ENCODE measurements at regions of chr2 and their contacts with region 1.

Region 1: DNA sequence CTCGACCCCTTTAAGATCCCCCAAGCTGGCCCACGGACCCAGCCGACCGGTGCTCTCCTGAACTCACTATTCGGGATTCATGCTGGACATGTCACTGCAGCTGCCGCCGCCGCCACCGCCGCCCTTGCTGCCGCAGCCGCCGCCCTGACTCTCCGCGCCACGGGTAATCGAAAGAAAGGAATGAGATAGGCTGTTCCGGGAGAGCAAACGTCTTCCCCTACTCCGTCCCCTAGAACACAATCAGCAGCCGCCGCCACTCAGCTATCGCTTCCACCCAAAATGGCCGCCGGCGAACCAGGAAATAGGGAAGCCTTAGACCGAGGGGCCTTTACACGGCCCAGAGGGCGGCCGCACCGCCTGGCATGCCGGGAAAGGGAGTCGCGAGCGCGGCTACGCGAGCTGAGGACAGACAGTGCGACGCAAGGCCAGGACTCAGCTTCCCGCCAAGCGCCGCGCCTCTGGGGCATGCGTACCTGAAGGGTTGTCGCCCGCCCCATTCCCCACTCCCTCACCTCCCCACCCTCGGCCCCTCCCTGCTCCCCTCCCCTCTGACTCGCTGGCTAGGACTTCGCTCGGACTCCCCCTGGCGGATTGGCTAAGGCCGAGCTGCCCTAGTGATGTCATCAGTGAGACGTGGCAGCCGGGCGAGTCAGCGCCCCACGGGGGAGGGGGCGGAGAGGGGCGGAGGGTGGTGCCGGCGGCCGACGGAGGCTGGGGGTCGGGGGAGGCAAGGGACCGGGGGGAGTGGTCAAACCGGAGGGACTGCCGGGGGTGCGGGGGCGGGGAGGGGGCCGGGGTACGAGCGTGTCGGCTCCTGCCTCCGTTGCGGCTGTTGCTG is at the start of gene RAB1A:
- DNase-seq: peak; percentile 98 to 100 (median 99)
- H3K4me3 ChIP-seq: peak within 1 kb of the TSS; percentile 60 to 98 (median 86)
- H3K27ac ChIP-seq: peak within 1 kb of the TSS; percentile 81 to 98 (median 93)
- H3K27me3 ChIP-seq: no peaks in the 10 kb centered on the region
- CTCF ChIP-seq: peak in 53 of 56 donors; percentile 4 to 79 (median 60)
- total RNA-seq, gene RAB1A: 87.4 to 171 (median 127) TPM

Region 2: DNA sequence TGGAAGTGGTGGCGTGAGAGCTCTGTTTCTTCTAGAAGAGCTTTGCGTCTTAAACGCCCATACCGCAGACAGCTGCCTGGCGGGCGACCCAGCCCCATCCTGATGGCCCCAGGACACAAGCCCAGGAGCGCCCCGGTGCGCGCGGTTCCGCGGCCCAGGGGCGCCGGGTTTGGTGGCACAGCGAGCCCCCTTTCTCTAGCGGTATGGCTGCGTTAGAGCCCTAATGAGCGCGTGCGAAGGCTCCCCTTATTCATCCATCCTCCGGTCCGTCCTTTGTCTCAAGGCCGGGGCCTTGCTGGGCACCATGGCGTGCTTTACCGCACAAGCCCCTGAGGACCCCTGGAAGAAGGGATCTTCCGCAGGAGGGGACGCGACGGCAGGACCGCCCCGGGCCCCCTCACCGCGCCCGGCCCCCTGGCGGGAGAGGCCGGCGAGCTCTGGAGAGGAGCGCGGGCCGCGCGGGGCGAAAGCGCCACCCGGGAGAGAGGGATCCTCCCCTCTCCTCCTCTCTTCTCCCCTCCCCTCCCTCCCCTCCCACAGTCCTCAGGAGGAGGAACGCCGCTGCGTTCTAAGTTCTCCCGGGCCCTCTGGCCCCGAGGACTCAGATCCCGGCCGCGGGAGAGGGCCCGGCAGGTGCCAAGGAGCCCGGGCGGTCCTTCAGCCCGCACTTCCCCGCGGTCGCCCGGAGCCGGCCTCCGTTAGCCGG is 141.5 kb before region 1 on chr2:
- intact Hi-C with region 1: loop called in 1 of 2 experiments (anchors 5 kb)
- DNase-seq: peak; percentile 27 to 69 (median 55)
- H3K4me3 ChIP-seq: peak overlapping the region; percentile 69 to 97 (median 88)
- H3K27ac ChIP-seq: peak overlapping the region; percentile 21 to 98 (median 95)
- H3K27me3 ChIP-seq: no peaks in the 10 kb centered on the region
- CTCF ChIP-seq: peak in 50 of 56 donors; percentile 17 to 67 (median 43)

Region 3: DNA sequence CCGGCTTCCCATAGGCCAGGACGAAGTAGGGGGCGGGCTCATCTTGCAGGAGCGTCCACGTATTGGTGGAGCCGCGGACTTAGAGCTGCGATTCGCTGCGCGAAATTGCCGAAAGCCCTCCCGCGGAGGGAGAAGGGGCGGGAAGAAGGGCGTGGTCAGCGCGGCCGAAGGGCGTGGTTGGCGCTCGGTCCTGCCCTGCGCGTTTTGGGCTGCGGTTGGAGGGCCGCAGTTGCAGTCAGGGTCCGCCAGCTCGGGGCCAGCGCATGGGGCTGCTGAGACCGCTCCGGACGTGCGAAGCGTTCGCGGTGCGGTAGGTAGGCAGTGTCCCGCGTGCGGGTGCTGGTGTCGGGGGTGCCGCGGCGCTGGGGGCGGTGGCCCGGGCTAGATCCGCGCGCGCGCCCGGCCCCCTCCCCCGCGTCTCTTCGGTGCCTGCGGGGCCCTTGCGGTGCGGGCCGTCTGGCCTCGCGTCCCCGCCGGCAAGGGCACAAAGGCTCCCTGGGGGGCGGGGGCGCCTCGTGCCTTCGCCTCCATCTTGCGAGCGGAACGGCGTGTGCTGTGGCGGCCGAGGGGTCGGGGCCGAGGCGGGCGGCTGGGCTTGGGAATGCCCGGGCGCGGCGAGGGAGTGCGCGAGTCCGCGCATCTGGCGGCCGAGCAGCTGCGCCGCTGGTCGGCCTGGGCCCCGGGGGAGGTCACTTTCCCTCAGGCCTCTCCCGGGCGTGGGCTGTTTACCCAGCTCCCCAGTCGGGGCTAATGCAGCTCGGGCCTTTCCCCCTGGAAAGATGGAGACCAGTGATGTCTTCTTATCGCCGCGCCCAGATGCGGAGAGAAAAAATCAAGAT is 73.6 kb before region 1 on chr2 and contains the start of gene CEP68:
- intact Hi-C with region 1: loop called (anchors 1 to 2 kb)
- DNase-seq: peak; percentile 91 to 98 (median 97)
- H3K4me3 ChIP-seq: peak within 1 kb of the TSS; percentile 53 to 98 (median 89)
- H3K27ac ChIP-seq: peak within 1 kb of the TSS; percentile 37 to 97 (median 88)
- H3K27me3 ChIP-seq: no peaks in the 10 kb centered on the region
- CTCF ChIP-seq: peak in 19 of 56 donors; percentile 1 to 52 (median 26)
- total RNA-seq, gene CEP68: 23.2 to 57.6 (median 40.4) TPM

Region 4: DNA sequence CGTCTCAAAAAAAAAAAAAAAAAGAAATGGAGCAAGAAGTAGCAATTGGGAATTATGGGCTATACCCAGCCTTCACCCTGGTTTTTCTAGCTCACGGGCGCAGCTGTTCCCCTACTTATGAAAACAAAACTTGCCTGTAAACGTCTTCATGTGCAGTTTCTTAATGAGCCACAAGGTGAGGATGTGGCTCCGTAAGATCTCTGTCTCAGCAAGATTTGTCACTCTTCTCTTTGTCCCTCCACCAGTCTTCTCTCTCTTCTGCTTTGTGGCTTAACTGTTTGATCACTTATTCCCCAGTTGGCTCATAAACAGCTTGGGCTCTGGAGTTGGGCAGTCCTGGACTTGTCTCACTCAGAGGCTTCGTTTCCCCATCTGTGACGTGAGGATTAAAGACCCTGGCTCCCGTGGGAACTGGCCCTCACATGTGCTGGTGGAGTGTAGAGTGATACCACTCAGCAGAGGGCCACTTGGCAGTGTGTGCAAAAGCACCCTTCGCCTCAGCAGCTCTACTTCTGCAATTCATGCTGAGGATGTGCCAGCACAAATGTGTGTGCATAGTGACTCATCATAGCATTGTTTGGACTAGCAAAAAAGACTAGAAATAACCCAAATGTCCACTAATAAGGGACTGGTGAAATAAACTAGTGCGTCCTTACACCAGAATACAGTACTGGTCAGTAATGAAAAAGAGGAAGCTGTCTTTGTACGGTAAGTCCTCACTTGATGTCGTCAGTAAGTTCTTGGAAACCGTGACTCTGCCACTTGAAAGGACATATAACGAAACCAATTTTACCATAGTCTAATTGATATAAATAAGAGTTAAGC is 65.1 kb before region 1 on chr2:
- intact Hi-C with region 1: loop called in 1 of 2 experiments (anchors 1 kb)
- DNase-seq: peak in 6 of 10 donors; percentile 59 to 78 (median 68)
- H3K4me3 ChIP-seq: peak overlapping the region in 46 of 59 donors; percentile 1 to 54 (median 20)
- H3K27ac ChIP-seq: peak overlapping the region; percentile 13 to 88 (median 75)
- H3K27me3 ChIP-seq: no peaks in the 10 kb centered on the region
- CTCF ChIP-seq: peak; percentile 50 to 79 (median 68)

Region 5: DNA sequence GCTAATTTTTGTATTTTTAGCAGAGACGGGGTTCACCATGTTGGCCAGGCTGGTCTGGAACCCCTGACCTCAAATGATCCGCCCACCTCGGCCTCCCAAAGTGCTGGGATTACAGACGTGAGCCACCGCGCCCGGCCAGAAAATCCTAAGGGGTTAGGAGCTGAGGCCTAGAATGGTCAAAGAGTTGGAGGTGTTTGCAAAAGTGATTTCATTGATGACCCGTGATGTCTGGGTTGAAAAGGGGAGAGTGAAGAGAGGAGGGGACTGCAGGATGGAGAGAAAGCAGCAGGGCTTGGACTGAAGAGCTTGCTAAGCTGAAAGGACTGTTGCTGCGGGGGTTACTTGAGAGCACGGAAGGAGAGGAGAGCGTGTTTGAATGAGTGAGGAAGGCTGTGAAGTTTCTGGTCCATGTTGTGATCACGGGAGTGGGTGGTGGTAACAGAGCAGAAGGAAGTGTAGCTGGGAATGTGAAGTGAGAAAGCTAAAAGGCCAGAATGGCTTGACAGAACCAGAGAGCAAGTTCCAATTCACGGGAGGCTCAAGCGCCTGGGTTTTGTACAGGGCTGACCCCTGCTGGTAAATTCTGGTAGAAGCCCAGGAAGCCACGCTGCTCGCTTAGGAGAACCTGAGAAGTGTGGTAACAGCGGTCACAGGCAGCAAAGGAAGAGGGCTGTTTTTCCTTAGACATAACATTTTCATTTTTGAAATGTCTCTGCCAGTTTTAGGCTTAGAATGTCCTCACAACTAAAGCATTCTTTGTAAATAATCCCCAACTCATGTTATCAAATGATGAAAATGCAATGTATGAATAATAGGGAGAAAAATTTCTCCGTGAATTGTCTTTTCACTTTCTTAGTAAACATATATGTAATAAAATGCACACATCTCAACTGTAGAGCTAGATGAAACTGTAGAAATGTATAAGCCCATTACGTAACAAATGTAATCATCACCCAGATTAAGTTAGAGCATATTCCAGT is 57.1 kb after region 1 on chr2:
- intact Hi-C with region 1: loop called in 1 of 2 experiments (anchors 2 kb)
- DNase-seq: peak; percentile 59 to 84 (median 80)
- H3K4me3 ChIP-seq: peak overlapping the region in 16 of 59 donors; percentile 1 to 36 (median 14)
- H3K27ac ChIP-seq: peak overlapping the region in 7 of 59 donors; percentile 3 to 67 (median 46)
- H3K27me3 ChIP-seq: no peaks in the 10 kb centered on the region
- CTCF ChIP-seq: peak; percentile 49 to 93 (median 82)

Region 6: GRCh38 chr2:65227425-65228262 is 97.6 kb after region 1 on chr2 and contains the start of gene ACTR2:
- intact Hi-C with region 1: loop called (anchors 2 to 5 kb)
- DNase-seq: peak; percentile 89 to 97 (median 96)
- H3K4me3 ChIP-seq: peak within 1 kb of the TSS; percentile 67 to 100 (median 97)
- H3K27ac ChIP-seq: peak within 1 kb of the TSS; percentile 27 to 98 (median 91)
- H3K27me3 ChIP-seq: no peaks in the 10 kb centered on the region
- CTCF ChIP-seq: peak in 20 of 56 donors; percentile 4 to 48 (median 19)
- total RNA-seq, gene ACTR2: 106 to 287 (median 213) TPM

Measured in dorsolateral prefrontal cortex (tissue), 120 donors.